ENCODE measurements at regions of chr10 and their contacts with region 1.

Region 1: GRCh38 chr10:63133056-63133820 is at the start of gene NRBF2:
- DNase-seq: peak; percentile 98
- H3K4me3 Mint-ChIP-seq: peak within 1 kb of the TSS; percentile 89
- H3K27ac Mint-ChIP-seq: peak within 1 kb of the TSS; percentile 92
- H3K4me1 Mint-ChIP-seq: peaks cover 38% of the 10 kb centered on the region
- H3K27me3 Mint-ChIP-seq: no peaks in the 10 kb centered on the region
- total RNA-seq, gene NRBF2: 15.4 to 15.6 TPM

Region 2: DNA sequence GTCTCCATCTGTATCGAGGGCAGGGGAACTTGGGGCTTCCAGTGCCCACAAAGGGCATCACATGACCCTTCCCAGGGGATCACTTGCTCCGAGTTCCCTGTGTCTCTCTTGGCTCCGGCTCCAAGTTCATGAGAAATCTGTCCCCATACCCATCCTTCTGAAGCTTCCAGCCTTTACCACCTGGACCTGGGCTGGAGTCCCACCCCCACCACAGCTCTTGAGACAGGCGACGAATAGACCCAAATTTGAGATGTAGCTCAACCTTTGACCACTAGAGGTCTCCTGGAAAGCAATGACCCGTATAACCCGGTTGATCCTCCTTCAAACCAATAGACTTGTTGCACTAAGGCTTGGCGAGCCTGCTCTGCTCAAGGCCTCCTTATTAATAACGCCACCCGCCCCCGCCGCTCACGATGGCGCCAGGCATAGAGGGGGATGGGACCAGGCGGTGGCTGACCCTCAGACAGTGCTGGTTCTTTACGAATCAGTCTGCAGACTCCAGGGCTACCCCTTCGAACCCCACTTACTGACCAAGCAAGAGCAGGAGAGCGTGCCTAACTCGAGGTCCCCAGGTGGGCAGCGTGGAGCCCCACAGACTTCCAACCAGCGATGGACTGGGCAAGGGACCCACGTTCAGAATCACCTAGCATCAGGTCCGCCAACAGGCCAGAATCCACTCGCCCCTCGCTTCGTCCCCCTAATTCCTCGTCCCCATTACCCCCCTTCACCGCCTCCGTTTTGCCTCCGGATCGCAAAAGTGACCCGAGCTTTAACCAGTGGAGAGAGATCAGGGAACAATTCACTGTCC is 1236.2 kb before region 1 on chr10:
- CTCF ChIA-PET with region 1: no interaction called
- intact Hi-C with region 1: loop called (anchors 2 kb)
- DNase-seq: peak; percentile 78
- H3K4me3 Mint-ChIP-seq: peak overlapping the region; percentile 77
- H3K27ac Mint-ChIP-seq: peak overlapping the region; percentile 90
- H3K4me1 Mint-ChIP-seq: peaks cover 40% of the 10 kb centered on the region
- H3K27me3 Mint-ChIP-seq: no peaks in the 10 kb centered on the region

Region 3: GRCh38 chr10:62268399-62269114 is 864.7 kb before region 1 on chr10 and contains the start of gene RTKN2:
- CTCF ChIA-PET with region 1: no interaction called
- intact Hi-C with region 1: loop called (anchors 5 kb)
- DNase-seq: peak; percentile 78
- H3K4me3 Mint-ChIP-seq: peak within 1 kb of the TSS; percentile 72
- H3K27ac Mint-ChIP-seq: peak within 1 kb of the TSS; percentile 28
- H3K4me1 Mint-ChIP-seq: peaks cover 23% of the 10 kb centered on the region
- H3K27me3 Mint-ChIP-seq: peaks cover 13% of the 10 kb centered on the region
- total RNA-seq, gene RTKN2: 4.7 to 5.4 TPM

Region 4: DNA sequence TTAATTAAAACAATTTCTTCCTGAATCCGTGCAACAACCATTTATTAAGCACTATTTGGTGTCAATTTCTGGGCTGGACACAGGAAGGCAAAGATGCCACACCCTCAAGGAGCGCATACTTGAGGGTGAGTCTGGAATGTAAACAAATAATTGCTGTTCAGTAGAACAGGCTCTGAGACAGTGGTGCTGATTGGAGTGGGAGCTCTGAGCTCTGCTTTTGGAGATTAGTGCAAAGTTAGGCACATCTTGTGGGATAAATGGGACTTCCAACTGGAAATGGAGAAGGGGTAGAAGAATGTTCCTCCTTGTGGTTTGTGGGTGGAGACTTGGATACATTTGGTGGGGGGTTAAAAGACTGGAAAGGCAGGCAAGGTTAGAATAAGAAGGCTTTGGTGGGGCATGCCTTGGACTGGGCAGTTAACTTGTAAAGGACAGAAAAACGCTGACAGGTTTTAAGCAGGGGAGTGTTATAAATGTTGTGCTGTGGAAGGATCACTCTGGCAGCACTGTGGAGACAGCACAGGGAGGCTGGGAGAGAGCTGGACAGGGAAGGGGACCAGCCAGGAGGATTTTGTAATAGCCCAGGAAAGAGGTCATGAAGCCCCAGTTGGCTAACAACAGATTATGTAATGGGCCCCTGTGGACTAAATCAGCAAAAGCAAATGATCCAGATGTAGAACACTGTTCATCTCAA is 678.4 kb before region 1 on chr10:
- CTCF ChIA-PET with region 1: no interaction called
- intact Hi-C with region 1: no loop called
- DNase-seq: no peak
- H3K4me3 Mint-ChIP-seq: no peak overlapping the region
- H3K27ac Mint-ChIP-seq: no peak overlapping the region
- H3K4me1 Mint-ChIP-seq: no peaks in the 10 kb centered on the region
- H3K27me3 Mint-ChIP-seq: no peaks in the 10 kb centered on the region

Region 5: GRCh38 chr10:62528441-62528840 is 604.8 kb before region 1 on chr10:
- CTCF ChIA-PET with region 1: no interaction called
- intact Hi-C with region 1: loop called (anchors 1 kb)
- DNase-seq: no peak
- H3K4me3 Mint-ChIP-seq: peak overlapping the region; percentile 19
- H3K27ac Mint-ChIP-seq: peak overlapping the region; percentile 26
- H3K4me1 Mint-ChIP-seq: peaks cover 37% of the 10 kb centered on the region
- H3K27me3 Mint-ChIP-seq: no peaks in the 10 kb centered on the region

Region 6: GRCh38 chr10:62992145-62992721 is 141.0 kb before region 1 on chr10:
- CTCF ChIA-PET with region 1: no interaction called
- intact Hi-C with region 1: loop called (anchors 1 kb)
- DNase-seq: peak; percentile 24
- H3K4me3 Mint-ChIP-seq: peak overlapping the region; percentile 1
- H3K27ac Mint-ChIP-seq: peak overlapping the region; percentile 71
- H3K4me1 Mint-ChIP-seq: peaks cover 43% of the 10 kb centered on the region
- H3K27me3 Mint-ChIP-seq: peaks cover 3% of the 10 kb centered on the region

Region 7: GRCh38 chr10:63145782-63146181 is 12.5 kb after region 1 on chr10:
- CTCF ChIA-PET with region 1: interaction called, 7 read pairs
- intact Hi-C with region 1: loop called (anchors 1 kb)
- DNase-seq: no peak
- H3K4me3 Mint-ChIP-seq: no peak overlapping the region
- H3K27ac Mint-ChIP-seq: no peak overlapping the region
- H3K4me1 Mint-ChIP-seq: peaks cover 42% of the 10 kb centered on the region
- H3K27me3 Mint-ChIP-seq: no peaks in the 10 kb centered on the region

Region 8: GRCh38 chr10:63173468-63174232 is 40.4 kb after region 1 on chr10:
- CTCF ChIA-PET with region 1: no interaction called
- intact Hi-C with region 1: loop called (anchors 1 kb)
- DNase-seq: peak; percentile 18
- H3K4me3 Mint-ChIP-seq: no peak overlapping the region
- H3K27ac Mint-ChIP-seq: peak overlapping the region; percentile 71
- H3K4me1 Mint-ChIP-seq: peaks cover 62% of the 10 kb centered on the region
- H3K27me3 Mint-ChIP-seq: no peaks in the 10 kb centered on the region

Region 9: GRCh38 chr10:63421591-63421990 is 288.4 kb after region 1 on chr10:
- CTCF ChIA-PET with region 1: no interaction called
- intact Hi-C with region 1: no loop called
- DNase-seq: no peak
- H3K4me3 Mint-ChIP-seq: no peak overlapping the region
- H3K27ac Mint-ChIP-seq: peak overlapping the region; percentile 73
- H3K4me1 Mint-ChIP-seq: peaks cover 39% of the 10 kb centered on the region
- H3K27me3 Mint-ChIP-seq: no peaks in the 10 kb centered on the region

Measured in activated naive CD4-positive, alpha-beta T cell treated with anti-CD3 and anti-CD28 coated beads for 36 hours (primary cell).